PC-9 (cell line): ENCODE measurements at regions of chr6 and their contacts with region 1.

Region 1: DNA sequence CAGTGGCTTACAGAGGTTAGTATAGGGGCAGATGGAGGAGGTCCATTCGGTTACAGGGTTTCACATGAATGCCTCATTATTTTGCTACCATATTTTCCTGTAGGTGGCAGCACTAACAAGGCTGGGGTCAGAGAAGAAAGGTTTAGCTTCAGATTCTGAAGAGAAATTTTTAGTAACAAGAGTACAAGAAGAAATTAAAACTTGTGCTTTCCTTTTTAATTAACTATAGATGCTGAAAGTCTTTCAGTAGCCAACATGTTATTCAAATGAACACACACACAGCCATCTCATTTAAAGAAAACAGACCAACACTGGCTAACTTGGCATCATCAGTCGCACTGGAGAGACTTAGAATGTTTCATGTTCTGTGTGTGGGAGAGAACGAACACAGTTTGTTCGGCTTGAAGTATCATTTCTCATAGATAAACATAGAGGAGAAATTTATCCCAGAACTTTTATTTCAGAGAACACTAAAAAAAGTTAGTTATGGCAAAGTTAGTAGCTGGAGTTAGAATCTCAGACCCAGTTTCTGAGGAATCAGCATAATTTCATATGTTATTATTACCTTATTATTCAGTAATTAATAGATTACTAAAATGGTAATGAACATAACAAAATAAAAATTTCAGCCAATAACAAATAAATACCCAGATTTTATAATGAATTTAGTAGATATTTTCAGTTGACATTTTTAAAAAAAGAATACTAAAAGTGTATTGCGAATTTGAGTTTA is 314.0 kb upstream of the RSPO3 start:
- DNase-seq: peak in 1 of 2 experiments; percentile 10
- H3K4me3 ChIP-seq: no peak overlapping the region
- H3K27ac ChIP-seq: no peak overlapping the region
- H3K4me1 ChIP-seq: no peaks in the 10 kb centered on the region
- H3K27me3 ChIP-seq: no peaks in the 10 kb centered on the region
- CTCF ChIP-seq: peak; percentile 92

Region 2: DNA sequence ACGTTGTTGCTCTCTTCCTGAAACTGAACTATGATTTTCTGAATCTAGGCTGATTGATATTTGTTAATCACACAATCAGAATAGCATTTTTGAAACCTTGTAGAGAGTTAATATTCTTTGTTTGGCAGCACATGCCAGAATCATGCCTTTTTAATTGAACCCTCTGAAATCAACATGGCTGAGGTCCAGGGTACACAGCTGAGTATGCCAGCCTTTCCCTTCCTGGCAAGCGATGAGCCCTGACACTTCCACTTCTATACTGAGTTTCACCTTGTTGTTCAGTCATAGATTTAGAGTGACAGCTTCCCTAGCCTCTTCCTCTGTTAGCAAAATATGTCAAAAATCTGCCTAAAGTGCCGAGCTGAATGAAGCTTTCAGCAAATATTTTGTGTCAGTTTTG is 1509.6 kb before region 1 on chr6:
- CTCF ChIA-PET with region 1: no interaction called
- POLR2A ChIA-PET with region 1: no interaction called
- intact Hi-C with region 1: no loop called
- DNase-seq: no peak
- H3K4me3 ChIP-seq: no peak overlapping the region
- H3K27ac ChIP-seq: no peak overlapping the region
- H3K4me1 ChIP-seq: peaks cover 2% of the 10 kb centered on the region
- H3K27me3 ChIP-seq: no peaks in the 10 kb centered on the region
- CTCF ChIP-seq: no peak

Region 3: DNA sequence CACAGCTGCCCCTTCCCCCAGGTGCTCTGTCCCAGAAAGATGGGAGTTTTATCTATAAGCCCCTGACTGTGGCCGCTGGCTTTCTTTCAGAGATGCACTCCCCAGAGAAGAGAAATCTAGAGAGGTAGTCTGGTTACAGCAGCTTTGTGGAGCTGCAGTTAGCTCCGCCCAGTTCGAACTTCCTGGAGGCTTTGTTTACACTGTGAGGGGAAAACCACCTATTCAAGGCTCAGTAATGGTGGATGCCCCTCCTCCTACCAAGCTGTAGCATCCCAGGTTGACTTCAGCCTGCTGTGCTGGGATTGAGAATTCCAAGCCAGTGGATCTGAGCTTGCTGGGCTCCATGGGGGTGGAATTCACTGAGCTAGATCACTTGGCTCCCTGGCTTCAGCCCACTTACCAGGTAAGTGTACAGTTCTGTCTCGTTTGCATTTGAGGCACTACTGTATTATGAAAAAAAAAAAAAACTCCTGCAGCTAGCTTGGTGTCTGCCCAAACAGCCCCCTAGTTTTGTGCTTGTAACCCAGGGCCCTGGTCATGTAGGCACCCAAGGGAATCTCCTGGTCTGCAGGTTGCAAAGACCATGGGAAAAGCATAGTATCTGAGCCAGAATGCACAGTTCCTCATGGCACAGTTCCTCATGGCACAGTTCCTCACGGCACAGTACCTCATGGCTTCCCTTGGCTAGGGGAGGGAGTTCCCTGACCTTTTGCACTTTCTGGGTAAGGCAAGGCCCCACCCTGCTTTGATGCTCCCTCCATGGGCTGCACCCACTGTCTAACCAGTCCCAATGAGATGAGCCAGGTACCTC is 189.7 kb before region 1 on chr6:
- CTCF ChIA-PET with region 1: no interaction called
- POLR2A ChIA-PET with region 1: no interaction called
- intact Hi-C with region 1: no loop called
- DNase-seq: no peak
- H3K4me3 ChIP-seq: no peak overlapping the region
- H3K27ac ChIP-seq: no peak overlapping the region
- H3K4me1 ChIP-seq: no peaks in the 10 kb centered on the region
- H3K27me3 ChIP-seq: no peaks in the 10 kb centered on the region
- CTCF ChIP-seq: no peak

Region 4: GRCh38 chr6:126897758-126898157 is 93.3 kb after region 1 on chr6:
- CTCF ChIA-PET with region 1: no interaction called
- POLR2A ChIA-PET with region 1: no interaction called
- intact Hi-C with region 1: no loop called
- DNase-seq: no peak
- H3K4me3 ChIP-seq: no peak overlapping the region
- H3K27ac ChIP-seq: no peak overlapping the region
- H3K4me1 ChIP-seq: no peaks in the 10 kb centered on the region
- H3K27me3 ChIP-seq: no peaks in the 10 kb centered on the region
- CTCF ChIP-seq: no peak

Region 5: DNA sequence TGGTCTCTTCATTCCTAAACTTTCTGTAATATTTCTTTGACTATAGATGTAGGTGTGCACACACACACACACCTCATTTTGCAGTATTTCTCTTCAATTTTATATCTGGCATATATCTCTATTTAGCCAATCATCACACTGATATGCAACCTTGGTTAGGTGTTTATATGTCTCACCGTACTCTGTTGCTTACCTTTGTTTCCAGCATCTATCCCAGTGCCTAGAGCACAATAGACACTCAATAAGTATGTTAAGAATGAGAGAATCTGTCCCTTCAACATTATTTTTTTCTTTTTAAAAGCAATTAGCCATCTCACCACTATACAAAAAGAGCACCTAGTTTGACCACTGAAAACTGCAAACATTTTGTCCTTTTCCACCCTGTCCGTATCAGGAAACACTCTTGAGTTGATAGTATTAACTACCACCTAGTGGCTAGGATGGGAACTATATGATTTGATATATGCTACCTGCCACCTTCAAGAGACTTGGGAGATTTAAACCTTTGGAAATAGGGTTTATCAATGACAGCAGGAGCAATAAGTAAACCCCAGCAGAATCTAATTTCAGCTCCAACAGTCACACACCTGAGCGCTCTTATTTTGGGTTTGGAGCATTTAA is 265.3 kb after region 1 on chr6:
- CTCF ChIA-PET with region 1: no interaction called
- POLR2A ChIA-PET with region 1: no interaction called
- intact Hi-C with region 1: loop called (anchors 1 kb)
- DNase-seq: no peak
- H3K4me3 ChIP-seq: no peak overlapping the region
- H3K27ac ChIP-seq: no peak overlapping the region
- H3K4me1 ChIP-seq: no peaks in the 10 kb centered on the region
- H3K27me3 ChIP-seq: no peaks in the 10 kb centered on the region
- CTCF ChIP-seq: peak; percentile 82